Activated CD4-positive, alpha-beta memory T cell treated with anti-CD3 and anti-CD28 coated beads for 36 hours (primary cell): ENCODE measurements at regions of chr3 and their contacts with region 1.

Region 1: GRCh38 chr3:190883973-190884832 is 21.7 kb upstream of the GMNC start:
- DNase-seq: peak; percentile 31
- H3K4me3 Mint-ChIP-seq: no peak overlapping the region
- H3K27ac Mint-ChIP-seq: no peak overlapping the region
- H3K4me1 Mint-ChIP-seq: no peaks in the 10 kb centered on the region
- H3K27me3 Mint-ChIP-seq: peaks cover 5% of the 10 kb centered on the region

Region 2: DNA sequence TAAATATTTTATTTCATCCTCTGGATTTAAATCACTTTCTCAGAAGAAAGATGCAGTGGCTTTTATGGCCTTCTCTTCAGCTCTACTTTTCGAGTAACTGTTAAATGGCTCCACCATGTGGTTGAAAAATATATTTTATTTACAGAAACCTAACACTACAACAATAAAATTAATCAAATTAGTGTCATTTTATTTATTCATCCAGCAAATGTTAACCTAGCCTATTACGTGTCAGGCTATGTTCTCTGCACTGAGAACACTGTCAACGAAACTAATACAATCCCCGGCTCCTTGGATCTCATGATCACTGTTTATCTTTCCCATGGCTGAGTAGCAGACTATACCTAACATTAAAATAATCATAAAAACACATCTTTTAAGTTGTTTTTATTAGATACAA is 166.8 kb after region 1 on chr3:
- CTCF ChIA-PET with region 1: interaction called, 6 read pairs
- POLR2A ChIA-PET with region 1: no interaction called
- intact Hi-C with region 1: loop called (anchors 2 kb)
- DNase-seq: no peak
- H3K4me3 Mint-ChIP-seq: no peak overlapping the region
- H3K27ac Mint-ChIP-seq: no peak overlapping the region
- H3K4me1 Mint-ChIP-seq: no peaks in the 10 kb centered on the region
- H3K27me3 Mint-ChIP-seq: no peaks in the 10 kb centered on the region